ENCODE measurements at regions of chr9 and their contacts with region 1.

Region 1: GRCh38 chr9:132901856-132902831 is 23.4 kb downstream of the SPACA9 start:
- DNase-seq: peak; percentile 67
- H3K4me3 ChIP-seq: no peak overlapping the region
- H3K27ac ChIP-seq: no peak overlapping the region
- H3K4me1 ChIP-seq: no peaks in the 10 kb centered on the region
- H3K27me3 ChIP-seq: no peaks in the 10 kb centered on the region
- CTCF ChIP-seq: peak; percentile 88 to 95 (median 91)
- EP300 ChIP-seq: no peak
- POLR2A ChIP-seq: no peak

Region 2: GRCh38 chr9:132669698-132670456 is 232.3 kb before region 1 on chr9 and contains the start of gene DDX31:
- in situ Hi-C with region 1: no loop called
- intact Hi-C with region 1: loop called (anchors 10 kb)
- DNase-seq: peak; percentile 87
- H3K4me3 ChIP-seq: peak within 1 kb of the TSS; percentile 73 to 100 (median 90)
- H3K27ac ChIP-seq: peak within 1 kb of the TSS; percentile 93 to 99 (median 95)
- H3K4me1 ChIP-seq: peaks cover 13 to 39% (median 25%) of the 10 kb centered on the region in 4 donors
- H3K27me3 ChIP-seq: no peaks in the 10 kb centered on the region
- CTCF ChIP-seq: peak in 2 of 5 experiments; percentile 14 to 15
- EP300 ChIP-seq: no peak
- POLR2A ChIP-seq: peak; percentile 63
- total RNA-seq, gene DDX31: 6.1 to 30.1 (median 9.8) TPM

Region 3: DNA sequence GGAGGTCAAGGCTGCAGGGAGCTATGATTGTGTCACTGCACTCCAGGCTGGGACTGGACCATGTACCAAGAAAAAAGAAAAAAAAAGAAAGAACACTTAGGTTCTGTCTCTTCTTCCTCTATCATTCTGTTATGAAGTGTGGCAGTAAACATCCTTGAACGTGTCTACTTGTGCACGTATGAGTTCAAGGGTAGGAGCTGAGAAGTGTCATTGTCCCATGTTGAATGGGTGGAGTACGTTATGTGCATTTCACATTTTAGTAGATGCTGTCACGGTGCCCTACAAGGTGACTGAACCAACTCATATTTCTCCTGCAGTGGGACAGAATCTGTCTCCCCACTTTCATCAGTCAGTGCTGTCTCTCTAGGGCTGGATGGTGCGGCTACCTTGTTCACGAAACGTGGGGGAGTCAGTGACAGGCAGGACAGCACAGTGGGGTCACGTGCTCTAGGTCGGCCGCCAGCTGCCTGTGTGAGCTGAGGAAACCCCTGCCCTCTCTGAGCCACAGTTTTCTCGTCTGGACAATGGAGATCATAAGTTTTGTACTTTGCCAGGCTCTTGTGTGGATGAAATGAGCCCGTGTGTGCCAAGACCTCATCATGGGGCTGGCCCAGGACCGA is 184.7 kb before region 1 on chr9:
- in situ Hi-C with region 1: no loop called
- intact Hi-C with region 1: no loop called
- DNase-seq: no peak
- H3K4me3 ChIP-seq: no peak overlapping the region
- H3K27ac ChIP-seq: no peak overlapping the region
- H3K4me1 ChIP-seq: no peaks in the 10 kb centered on the region
- H3K27me3 ChIP-seq: peaks cover 26% of the 10 kb centered on the region
- CTCF ChIP-seq: no peak
- EP300 ChIP-seq: no peak
- POLR2A ChIP-seq: no peak

Region 4: DNA sequence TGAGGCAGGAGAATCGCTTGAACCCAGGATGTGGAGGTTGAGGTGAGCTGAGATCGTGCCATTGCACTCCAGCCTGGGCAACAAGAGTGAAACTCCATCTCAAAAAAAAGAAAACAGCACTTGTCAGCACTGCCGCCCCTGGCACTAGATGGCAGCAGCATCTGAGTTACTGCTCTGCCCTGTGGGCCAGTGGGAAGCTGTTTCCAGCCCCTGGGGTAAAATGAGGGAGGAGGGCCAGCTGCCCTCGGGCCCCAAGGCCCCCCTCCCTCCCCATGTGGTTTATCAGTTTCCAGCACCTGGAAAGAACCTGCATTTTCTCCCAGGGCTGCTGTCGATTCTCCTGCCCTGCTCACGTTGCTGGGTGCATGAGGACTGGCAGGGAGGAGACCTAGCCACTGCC is 146.4 kb after region 1 on chr9:
- in situ Hi-C with region 1: no loop called
- intact Hi-C with region 1: no loop called
- DNase-seq: peak; percentile 31
- H3K4me3 ChIP-seq: no peak overlapping the region
- H3K27ac ChIP-seq: no peak overlapping the region
- H3K4me1 ChIP-seq: peaks cover 6 to 15% (median 10%) of the 10 kb centered on the region in 4 donors
- H3K27me3 ChIP-seq: no peaks in the 10 kb centered on the region
- CTCF ChIP-seq: peak in 4 of 5 experiments; percentile 23 to 32 (median 28)
- EP300 ChIP-seq: no peak
- POLR2A ChIP-seq: no peak

Region 5: DNA sequence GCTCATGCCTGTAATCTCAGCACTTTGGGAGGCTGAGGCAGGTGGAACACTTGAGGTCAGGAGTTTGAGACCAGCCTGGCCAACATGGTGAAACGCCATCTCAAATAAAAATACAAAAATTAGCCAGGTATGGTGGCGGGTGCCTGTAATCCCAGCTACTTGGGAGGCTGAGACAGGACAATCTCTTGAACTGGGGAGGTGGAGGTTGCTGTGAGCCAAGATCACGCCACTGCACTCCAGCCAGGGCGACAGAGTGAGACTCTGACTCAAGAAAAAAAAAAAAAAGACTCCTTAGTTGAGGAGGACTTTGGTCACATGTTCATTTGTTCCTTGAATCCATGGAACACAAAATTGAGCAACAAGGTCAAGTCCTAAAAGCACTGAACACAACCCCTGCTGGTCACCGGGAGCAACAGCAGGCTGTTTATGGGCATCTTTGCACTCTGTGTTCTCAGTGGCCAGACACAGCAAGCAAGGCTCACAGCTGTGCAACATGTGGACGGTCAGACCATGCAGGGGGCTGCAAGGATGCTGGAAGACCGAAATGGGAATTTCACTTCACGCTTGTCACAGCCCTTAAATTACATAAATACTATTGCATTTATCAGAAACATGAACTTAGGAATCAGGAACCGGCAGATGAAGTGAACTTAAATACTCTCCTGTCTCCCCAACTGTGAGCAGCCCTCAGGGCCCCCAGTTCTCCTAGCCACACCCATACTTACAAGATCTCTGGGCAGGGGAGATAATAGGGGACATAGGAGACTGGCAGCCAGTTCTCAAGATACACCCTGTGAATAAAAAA is 258.8 kb after region 1 on chr9:
- in situ Hi-C with region 1: no loop called
- intact Hi-C with region 1: no loop called
- DNase-seq: peak; percentile 76
- H3K4me3 ChIP-seq: no peak overlapping the region
- H3K27ac ChIP-seq: peak overlapping the region; percentile 33 to 57 (median 56)
- H3K4me1 ChIP-seq: peaks cover 0 to 30% (median 13%) of the 10 kb centered on the region in 4 donors
- H3K27me3 ChIP-seq: peaks cover 9% of the 10 kb centered on the region
- CTCF ChIP-seq: peak; percentile 68 to 88 (median 82)
- EP300 ChIP-seq: no peak
- POLR2A ChIP-seq: no peak

Region 6: GRCh38 chr9:134391314-134392231 is 1489.4 kb after region 1 on chr9:
- in situ Hi-C with region 1: no loop called
- intact Hi-C with region 1: no loop called
- DNase-seq: peak; percentile 54
- H3K4me3 ChIP-seq: no peak overlapping the region
- H3K27ac ChIP-seq: peak overlapping the region; percentile 23 to 38 (median 29)
- H3K4me1 ChIP-seq: peaks cover 29 to 83% (median 46%) of the 10 kb centered on the region in 4 donors
- H3K27me3 ChIP-seq: no peaks in the 10 kb centered on the region
- CTCF ChIP-seq: no peak
- EP300 ChIP-seq: no peak
- POLR2A ChIP-seq: no peak